AG04450 (cell line): ENCODE measurements at regions of chr2 and their contacts with region 1.

Region 1: GRCh38 chr2:108583903-108584520 is 49.7 kb downstream of the LIMS1 start:
- DNase-seq: no peak
- H3K4me3 ChIP-seq: no peak overlapping the region
- H3K27ac ChIP-seq: no peak overlapping the region
- H3K27me3 ChIP-seq: no peaks in the 10 kb centered on the region
- CTCF ChIP-seq: peak; percentile 82

Region 2: GRCh38 chr2:108396845-108397244 is 187.2 kb before region 1 on chr2:
- CTCF ChIA-PET with region 1: interaction called, 18 read pairs
- POLR2A ChIA-PET with region 1: no interaction called
- DNase-seq: no peak
- H3K4me3 ChIP-seq: no peak overlapping the region
- H3K27ac ChIP-seq: no peak overlapping the region
- H3K27me3 ChIP-seq: no peaks in the 10 kb centered on the region
- CTCF ChIP-seq: peak; percentile 47

Region 3: GRCh38 chr2:108533832-108534583 is 50.0 kb before region 1 on chr2 and contains the start of gene LIMS1:
- CTCF ChIA-PET with region 1: interaction called, 17 read pairs
- POLR2A ChIA-PET with region 1: interaction called, 9 read pairs
- DNase-seq: peak; percentile 46
- H3K4me3 ChIP-seq: peak within 1 kb of the TSS; percentile 78
- H3K27ac ChIP-seq: peak within 1 kb of the TSS; percentile 89
- H3K27me3 ChIP-seq: no peaks in the 10 kb centered on the region
- CTCF ChIP-seq: no peak
- polyA plus RNA-seq, gene LIMS1: 87.3 and 95.0 TPM in 2 replicates

Region 4: GRCh38 chr2:108548208-108549003 is 35.6 kb before region 1 on chr2:
- CTCF ChIA-PET with region 1: interaction called, 11 read pairs
- POLR2A ChIA-PET with region 1: no interaction called
- DNase-seq: no peak
- H3K4me3 ChIP-seq: no peak overlapping the region
- H3K27ac ChIP-seq: no peak overlapping the region
- H3K27me3 ChIP-seq: no peaks in the 10 kb centered on the region
- CTCF ChIP-seq: no peak

Region 5: GRCh38 chr2:108637304-108637669 is 53.3 kb after region 1 on chr2:
- CTCF ChIA-PET with region 1: interaction called, 29 read pairs
- POLR2A ChIA-PET with region 1: interaction called, 4 read pairs
- DNase-seq: no peak
- H3K4me3 ChIP-seq: no peak overlapping the region
- H3K27ac ChIP-seq: peak overlapping the region; percentile 68
- H3K27me3 ChIP-seq: no peaks in the 10 kb centered on the region
- CTCF ChIP-seq: no peak